ENCODE measurements at regions of chr14 and their contacts with region 1.

Region 1: GRCh38 chr14:96424109-96424989 is 32.4 kb downstream of the AK7 start:
- DNase-seq: peak; percentile 34
- H3K4me3 Mint-ChIP-seq: peak overlapping the region; percentile 65
- H3K27ac Mint-ChIP-seq: no peak overlapping the region
- H3K4me1 Mint-ChIP-seq: peaks cover 5% of the 10 kb centered on the region
- H3K27me3 Mint-ChIP-seq: peaks cover 5% of the 10 kb centered on the region

Region 2: DNA sequence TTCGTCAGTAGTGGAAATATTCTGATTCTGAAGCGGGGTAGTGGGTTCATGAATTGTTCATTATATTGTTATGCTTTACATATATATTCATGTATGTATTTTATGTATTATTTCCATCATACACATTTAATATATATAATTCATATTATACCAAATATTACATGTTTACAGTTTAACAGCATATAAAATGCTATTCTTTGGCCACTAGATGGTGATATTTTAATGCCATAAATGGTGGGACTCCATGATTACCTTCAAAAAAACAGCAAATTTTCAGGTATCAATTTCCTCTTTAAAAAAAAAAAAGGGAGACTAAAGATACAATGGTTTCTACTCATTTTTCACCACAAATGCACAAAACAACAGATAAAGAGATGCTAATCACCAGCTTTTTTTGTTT is 127.3 kb before region 1 on chr14:
- CTCF ChIA-PET with region 1: interaction called, 11 read pairs
- POLR2A ChIA-PET with region 1: no interaction called
- DNase-seq: no peak
- H3K4me3 Mint-ChIP-seq: no peak overlapping the region
- H3K27ac Mint-ChIP-seq: no peak overlapping the region
- H3K4me1 Mint-ChIP-seq: no peaks in the 10 kb centered on the region
- H3K27me3 Mint-ChIP-seq: no peaks in the 10 kb centered on the region